H1 (cell line): ENCODE measurements at regions of chr11 and their contacts with region 1.

Region 1: GRCh38 chr11:47152953-47153950 is 23.4 kb downstream of the ARFGAP2 start:
- DNase-seq: peak in 1 of 2 experiments; percentile 97
- H3K4me3 ChIP-seq: no peak overlapping the region
- H3K27ac ChIP-seq: no peak overlapping the region
- H3K4me1 ChIP-seq: peaks cover 0 to 4% (median 2%) of the 10 kb centered on the region in 4 experiments; a peak in 4 of 7 replicates
- H3K27me3 ChIP-seq: no peaks in the 10 kb centered on the region
- CTCF ChIP-seq: peak; percentile 95 to 100 (median 99)
- EP300 ChIP-seq: no peak
- POLR2A ChIP-seq: no peak
- RAD21 ChIP-seq: peak; percentile 99

Region 2: GRCh38 chr11:46889689-46890475 is 263.4 kb before region 1 on chr11:
- CTCF ChIA-PET with region 1: interaction called, 66 read pairs
- POLR2A ChIA-PET with region 1: interaction called, 3 read pairs
- DNase-seq: peak; percentile 51 to 91
- H3K4me3 ChIP-seq: no peak overlapping the region
- H3K27ac ChIP-seq: 0 out of 2 replicates have a peak overlapping the region, but pooled peaks have one; percentile 6
- H3K4me1 ChIP-seq: no peaks in the 10 kb centered on the region
- H3K27me3 ChIP-seq: no peaks in the 10 kb centered on the region
- CTCF ChIP-seq: peak; percentile 63 to 96 (median 92)
- EP300 ChIP-seq: no peak
- POLR2A ChIP-seq: no peak
- RAD21 ChIP-seq: peak; percentile 98

Region 3: DNA sequence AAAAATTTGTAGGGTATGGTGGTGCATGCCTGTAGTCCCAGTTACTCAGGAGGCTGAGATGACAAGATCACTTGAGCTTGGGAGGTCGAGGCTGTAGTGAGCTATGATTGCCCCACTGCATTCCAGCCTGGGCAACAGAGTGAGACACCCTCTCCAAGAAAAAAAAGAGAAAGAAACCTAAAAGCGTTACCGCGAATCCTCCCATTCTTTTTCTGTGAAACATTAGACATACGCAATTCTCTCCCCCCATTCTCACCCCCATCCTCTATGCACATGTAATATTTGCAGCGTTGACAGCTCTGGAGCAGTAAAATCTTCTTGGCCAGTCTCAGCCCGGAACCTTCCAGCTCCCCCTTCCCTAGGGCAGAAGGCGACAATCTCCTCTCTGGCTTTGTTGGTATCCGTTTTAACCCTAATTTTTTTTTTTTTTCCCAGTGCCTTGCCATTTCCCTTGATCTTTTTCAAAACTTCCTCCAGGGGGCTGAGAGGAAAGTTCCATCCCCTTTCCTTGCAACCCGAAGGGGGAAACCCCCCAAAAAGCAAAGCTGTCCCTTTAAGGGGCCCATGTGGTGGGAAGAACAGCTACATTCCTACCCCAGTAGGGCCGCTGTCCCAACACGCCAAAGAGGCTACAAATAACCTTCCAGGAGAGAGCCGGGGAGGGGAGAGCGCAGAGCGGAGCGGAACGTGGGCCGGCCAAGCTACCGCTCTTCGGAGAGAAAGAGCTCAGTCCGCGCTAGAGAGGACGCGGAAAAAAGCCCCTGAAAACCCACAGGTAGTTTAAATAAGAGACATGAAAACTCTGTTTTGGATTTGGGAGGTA is 236.8 kb before region 1 on chr11:
- CTCF ChIA-PET with region 1: interaction called, 81 read pairs
- POLR2A ChIA-PET with region 1: interaction called, 9 read pairs
- DNase-seq: peak in 1 of 2 experiments; percentile 69
- H3K4me3 ChIP-seq: peak overlapping the region; percentile 53 to 74 (median 62)
- H3K27ac ChIP-seq: no peak overlapping the region
- H3K4me1 ChIP-seq: peaks cover 18 to 26% (median 21%) of the 10 kb centered on the region in 4 experiments
- H3K27me3 ChIP-seq: peaks cover 0 to 15% (median 5%) of the 10 kb centered on the region in 4 experiments; a peak in 5 of 7 replicates
- CTCF ChIP-seq: no peak
- EP300 ChIP-seq: no peak
- POLR2A ChIP-seq: no peak
- RAD21 ChIP-seq: no peak

Region 4: DNA sequence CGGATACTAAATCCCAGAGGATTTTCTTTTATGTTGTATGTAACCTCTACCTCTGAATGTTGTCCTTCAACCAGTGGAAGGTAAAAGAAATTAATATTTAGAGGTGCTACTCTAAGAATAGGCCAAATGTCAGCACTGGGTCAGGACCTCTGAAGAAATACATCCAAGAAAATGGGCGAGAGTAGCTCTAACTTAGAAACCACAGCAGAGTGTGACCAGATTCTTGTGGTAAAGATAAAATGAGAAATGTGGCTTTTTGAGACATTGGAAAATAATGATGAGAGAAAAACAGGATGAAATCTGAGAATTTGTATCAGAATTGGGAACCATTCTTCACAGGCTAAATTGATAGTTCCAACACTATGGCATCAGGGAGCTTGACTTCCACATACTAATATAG is 153.2 kb before region 1 on chr11:
- CTCF ChIA-PET with region 1: interaction called, 14 read pairs
- POLR2A ChIA-PET with region 1: no interaction called
- DNase-seq: no peak
- H3K4me3 ChIP-seq: no peak overlapping the region
- H3K27ac ChIP-seq: no peak overlapping the region
- H3K4me1 ChIP-seq: no peaks in the 10 kb centered on the region; a peak in 2 of 7 replicates
- H3K27me3 ChIP-seq: no peaks in the 10 kb centered on the region
- CTCF ChIP-seq: no peak
- EP300 ChIP-seq: no peak
- POLR2A ChIP-seq: no peak
- RAD21 ChIP-seq: no peak

Region 5: GRCh38 chr11:47130543-47130942 is 22.7 kb before region 1 on chr11:
- CTCF ChIA-PET with region 1: interaction called, 15 read pairs
- POLR2A ChIA-PET with region 1: interaction called, 3 read pairs
- DNase-seq: no peak
- H3K4me3 ChIP-seq: peak overlapping the region in 1 of 4 experiments; percentile 22; a peak in 1 of 8 replicates
- H3K27ac ChIP-seq: no peak overlapping the region
- H3K4me1 ChIP-seq: peaks cover 2 to 13% (median 7%) of the 10 kb centered on the region in 4 experiments; a peak in 5 of 7 replicates
- H3K27me3 ChIP-seq: no peaks in the 10 kb centered on the region
- CTCF ChIP-seq: no peak
- EP300 ChIP-seq: peak in 1 of 2 experiments; percentile 77; a peak in 1 of 3 replicates
- POLR2A ChIP-seq: no peak
- RAD21 ChIP-seq: no peak

Region 6: GRCh38 chr11:47305734-47306483 is 152.7 kb after region 1 on chr11:
- CTCF ChIA-PET with region 1: no interaction called
- POLR2A ChIA-PET with region 1: no interaction called
- DNase-seq: no peak
- H3K4me3 ChIP-seq: no peak overlapping the region
- H3K27ac ChIP-seq: no peak overlapping the region
- H3K4me1 ChIP-seq: no peaks in the 10 kb centered on the region
- H3K27me3 ChIP-seq: no peaks in the 10 kb centered on the region
- CTCF ChIP-seq: no peak
- EP300 ChIP-seq: no peak
- POLR2A ChIP-seq: no peak
- RAD21 ChIP-seq: no peak